ENCODE measurements at regions of chr11 and their contacts with region 1.

Region 1: DNA sequence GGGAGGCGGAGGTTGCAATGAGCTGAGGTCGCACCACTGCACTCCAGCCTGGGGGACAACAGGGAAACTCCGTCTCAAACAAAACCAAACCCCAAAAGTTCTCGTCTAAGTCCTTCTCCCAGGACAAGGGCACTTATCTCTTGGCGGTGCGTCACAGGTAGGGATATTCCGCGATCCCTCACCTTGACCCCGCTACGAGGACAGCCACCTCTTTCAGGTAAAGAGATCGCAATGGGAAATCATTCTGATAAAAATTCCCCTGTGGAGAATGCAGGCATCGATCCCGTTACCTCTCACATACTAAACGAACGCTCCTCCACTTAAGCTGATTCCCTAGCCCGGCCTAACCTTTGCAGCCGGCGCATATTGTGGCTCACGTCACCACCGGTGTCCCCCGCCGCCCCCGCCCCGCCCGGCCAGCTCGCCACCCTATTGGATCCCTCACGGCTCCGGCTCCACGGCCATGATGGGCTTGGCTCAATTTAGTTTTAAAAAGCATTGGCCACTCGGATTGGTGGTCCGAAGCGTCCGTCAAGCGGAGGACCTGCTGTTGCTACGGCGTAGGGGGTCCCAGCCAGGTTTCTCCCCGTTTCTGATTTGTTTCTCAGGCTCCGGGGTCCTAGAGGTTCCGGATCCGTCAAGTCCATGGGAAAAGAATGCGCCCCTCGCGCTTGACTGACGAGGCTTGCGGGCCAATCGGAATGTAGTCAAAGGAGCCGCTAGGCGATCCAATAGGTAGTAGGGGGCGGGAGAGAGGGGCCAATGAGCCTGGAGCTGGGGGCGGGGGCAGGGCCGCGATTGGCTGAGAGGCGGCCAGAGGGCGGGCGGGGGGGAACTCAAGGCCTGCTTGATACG is 439 bp upstream of the PPP6R3 start:
- DNase-seq: peak; percentile 97
- H3K4me3 ChIP-seq: peak overlapping the region; percentile 96
- H3K27ac ChIP-seq: peak overlapping the region; percentile 99
- H3K4me1 ChIP-seq: peaks cover 51% of the 10 kb centered on the region
- H3K27me3 ChIP-seq: no peaks in the 10 kb centered on the region
- CTCF ChIP-seq: no peak

Region 2: GRCh38 chr11:68081691-68082090 is 378.4 kb before region 1 on chr11:
- intact Hi-C with region 1: no loop called
- DNase-seq: no peak
- H3K4me3 ChIP-seq: no peak overlapping the region
- H3K27ac ChIP-seq: no peak overlapping the region
- H3K4me1 ChIP-seq: peaks cover 14% of the 10 kb centered on the region
- H3K27me3 ChIP-seq: no peaks in the 10 kb centered on the region
- CTCF ChIP-seq: no peak

Region 3: GRCh38 chr11:68498321-68498720 is 38.2 kb after region 1 on chr11:
- intact Hi-C with region 1: no loop called
- DNase-seq: no peak
- H3K4me3 ChIP-seq: no peak overlapping the region
- H3K27ac ChIP-seq: no peak overlapping the region
- H3K4me1 ChIP-seq: peaks cover 82% of the 10 kb centered on the region
- H3K27me3 ChIP-seq: no peaks in the 10 kb centered on the region
- CTCF ChIP-seq: no peak

Region 4: GRCh38 chr11:68509066-68509465 is 49.0 kb after region 1 on chr11:
- intact Hi-C with region 1: no loop called
- DNase-seq: no peak
- H3K4me3 ChIP-seq: no peak overlapping the region
- H3K27ac ChIP-seq: no peak overlapping the region
- H3K4me1 ChIP-seq: peaks cover 90% of the 10 kb centered on the region
- H3K27me3 ChIP-seq: no peaks in the 10 kb centered on the region
- CTCF ChIP-seq: no peak

Region 5: DNA sequence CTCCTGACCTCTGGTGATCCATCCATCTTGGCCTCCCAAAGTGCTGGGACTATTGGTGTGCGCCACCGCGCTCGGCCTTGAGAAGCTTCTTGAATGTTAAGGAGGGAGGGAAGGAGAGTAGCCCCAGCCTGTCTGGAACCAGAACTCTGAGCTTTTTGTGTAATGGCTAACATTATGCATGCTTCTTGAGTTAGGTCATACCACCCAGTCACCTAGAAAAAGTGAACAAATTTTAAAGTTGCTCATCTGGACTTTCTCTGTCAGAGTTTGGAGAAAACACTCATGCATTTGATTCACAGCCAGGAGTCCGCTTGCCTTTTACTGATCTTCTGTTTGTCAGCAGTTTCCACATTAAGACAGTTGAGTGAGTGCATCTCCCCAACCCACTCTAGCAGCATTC is 82.5 kb after region 1 on chr11:
- intact Hi-C with region 1: loop called (anchors 10 kb)
- DNase-seq: no peak
- H3K4me3 ChIP-seq: no peak overlapping the region
- H3K27ac ChIP-seq: peak overlapping the region; percentile 5
- H3K4me1 ChIP-seq: peaks cover 68% of the 10 kb centered on the region
- H3K27me3 ChIP-seq: no peaks in the 10 kb centered on the region
- CTCF ChIP-seq: no peak

Region 6: GRCh38 chr11:68584097-68584496 is 124.0 kb after region 1 on chr11:
- intact Hi-C with region 1: loop called (anchors 10 kb)
- DNase-seq: peak; percentile 31
- H3K4me3 ChIP-seq: no peak overlapping the region
- H3K27ac ChIP-seq: peak overlapping the region; percentile 87
- H3K4me1 ChIP-seq: peaks cover 84% of the 10 kb centered on the region
- H3K27me3 ChIP-seq: no peaks in the 10 kb centered on the region
- CTCF ChIP-seq: peak; percentile 61